PC-9 (cell line): ENCODE measurements at regions of chr14 and their contacts with region 1.

Region 1: GRCh38 chr14:68979021-68979782 is at the start of gene ACTN1:
- DNase-seq: peak; percentile 95 to 98
- H3K4me3 ChIP-seq: peak within 1 kb of the TSS; percentile 76
- H3K27ac ChIP-seq: peak within 1 kb of the TSS; percentile 93
- H3K4me1 ChIP-seq: peaks cover 47% of the 10 kb centered on the region
- H3K27me3 ChIP-seq: no peaks in the 10 kb centered on the region
- CTCF ChIP-seq: no peak
- total RNA-seq, gene ACTN1: 314 and 323 TPM in 2 replicates

Region 2: DNA sequence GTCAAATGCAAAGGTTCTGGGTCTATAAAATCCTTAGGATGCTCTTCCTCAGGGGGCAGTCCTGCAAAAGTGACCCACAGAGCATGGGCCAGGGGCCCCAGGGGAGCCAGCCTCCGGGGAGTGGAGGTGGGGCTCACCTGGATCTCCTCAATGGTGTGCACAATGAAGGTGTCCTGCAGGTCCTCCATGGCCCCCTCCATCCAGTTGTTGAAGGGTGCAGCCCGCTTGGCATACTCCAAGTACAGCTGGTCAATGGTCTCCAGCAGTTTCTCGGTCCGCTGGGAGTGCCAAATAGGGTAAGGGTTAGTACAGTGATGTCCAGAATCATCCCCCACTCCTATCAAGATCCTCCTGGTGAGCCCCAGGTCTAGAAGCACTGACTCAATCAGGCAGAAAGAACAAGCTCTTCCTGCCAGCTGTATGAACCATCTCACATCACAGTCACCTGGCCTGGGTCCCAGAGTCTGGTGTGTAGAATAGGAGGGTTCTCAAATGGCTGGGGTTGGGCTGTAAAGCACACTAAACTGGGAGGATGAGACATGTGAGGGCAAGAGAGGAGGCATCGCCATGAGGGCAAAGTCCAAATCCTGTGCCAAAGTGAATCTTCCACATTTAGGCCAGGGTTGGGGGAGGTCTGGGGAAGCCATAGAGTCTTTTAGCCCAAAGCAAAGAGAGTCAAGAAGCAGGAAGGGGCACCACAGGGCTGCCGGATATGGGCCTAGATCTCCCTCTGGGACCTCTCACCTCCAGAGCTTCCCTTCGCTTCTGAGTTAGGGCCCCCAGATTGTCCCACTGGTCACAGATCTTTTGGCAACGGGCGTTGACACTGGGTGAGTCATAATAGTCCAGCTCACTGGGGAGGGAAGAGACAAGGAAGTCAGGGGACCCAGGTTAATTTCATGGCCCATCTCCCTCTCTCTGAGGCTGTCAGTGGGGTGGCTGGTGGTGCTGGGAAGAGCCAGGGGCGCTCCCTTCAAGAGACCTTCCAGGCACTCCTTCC is 94.9 kb before region 1 on chr14:
- CTCF ChIA-PET with region 1: no interaction called
- POLR2A ChIA-PET with region 1: no interaction called
- intact Hi-C with region 1: no loop called
- DNase-seq: no peak
- H3K4me3 ChIP-seq: no peak overlapping the region
- H3K27ac ChIP-seq: no peak overlapping the region
- H3K4me1 ChIP-seq: no peaks in the 10 kb centered on the region
- H3K27me3 ChIP-seq: no peaks in the 10 kb centered on the region
- CTCF ChIP-seq: no peak

Region 3: GRCh38 chr14:68911594-68912227 is 67.5 kb before region 1 on chr14:
- CTCF ChIA-PET with region 1: interaction called, 3 read pairs
- POLR2A ChIA-PET with region 1: interaction called, 4 read pairs
- intact Hi-C with region 1: loop called (anchors 1 kb)
- DNase-seq: peak; percentile 69 to 73
- H3K4me3 ChIP-seq: no peak overlapping the region
- H3K27ac ChIP-seq: no peak overlapping the region
- H3K4me1 ChIP-seq: no peaks in the 10 kb centered on the region
- H3K27me3 ChIP-seq: no peaks in the 10 kb centered on the region
- CTCF ChIP-seq: peak; percentile 98

Region 4: DNA sequence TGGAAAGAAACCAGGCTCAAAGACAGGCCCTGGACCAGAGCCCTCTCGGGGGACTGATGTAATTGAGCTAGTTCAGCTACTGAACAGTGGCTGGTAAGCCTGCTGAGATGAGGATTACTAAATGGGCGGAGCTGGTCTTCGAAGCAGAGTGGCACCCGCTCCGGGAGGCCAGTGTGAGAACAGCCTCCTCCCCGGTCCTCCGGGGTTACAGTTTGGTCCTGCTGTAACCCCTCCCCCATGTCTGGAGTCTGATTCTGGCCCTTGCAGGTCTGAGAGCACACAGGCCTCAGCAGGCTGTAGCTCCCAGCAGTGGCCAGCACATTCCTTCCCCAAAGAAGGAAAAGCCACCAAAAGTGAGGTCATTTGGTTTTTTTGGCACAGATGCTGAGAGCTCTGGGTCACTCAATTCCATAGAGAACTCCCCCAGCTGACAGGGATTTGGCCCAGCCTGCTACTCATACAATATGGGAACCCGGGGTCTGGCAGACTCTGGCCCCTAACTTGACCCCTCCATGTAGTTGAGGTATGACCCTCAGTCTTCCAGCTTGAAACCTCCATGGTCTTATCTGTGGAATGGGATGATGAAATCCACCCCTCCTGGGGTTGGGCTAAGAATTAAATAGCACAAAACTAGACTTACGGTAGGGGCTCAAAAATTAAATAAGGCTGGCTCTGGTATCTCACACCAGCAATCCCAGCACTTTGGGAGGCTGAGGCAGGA is 39.1 kb before region 1 on chr14:
- CTCF ChIA-PET with region 1: interaction called, 7 read pairs
- POLR2A ChIA-PET with region 1: interaction called, 44 read pairs
- intact Hi-C with region 1: loop called (anchors 1 kb)
- DNase-seq: peak; percentile 76 to 80
- H3K4me3 ChIP-seq: no peak overlapping the region
- H3K27ac ChIP-seq: peak overlapping the region; percentile 40
- H3K4me1 ChIP-seq: peaks cover 78% of the 10 kb centered on the region
- H3K27me3 ChIP-seq: no peaks in the 10 kb centered on the region
- CTCF ChIP-seq: no peak

Region 5: DNA sequence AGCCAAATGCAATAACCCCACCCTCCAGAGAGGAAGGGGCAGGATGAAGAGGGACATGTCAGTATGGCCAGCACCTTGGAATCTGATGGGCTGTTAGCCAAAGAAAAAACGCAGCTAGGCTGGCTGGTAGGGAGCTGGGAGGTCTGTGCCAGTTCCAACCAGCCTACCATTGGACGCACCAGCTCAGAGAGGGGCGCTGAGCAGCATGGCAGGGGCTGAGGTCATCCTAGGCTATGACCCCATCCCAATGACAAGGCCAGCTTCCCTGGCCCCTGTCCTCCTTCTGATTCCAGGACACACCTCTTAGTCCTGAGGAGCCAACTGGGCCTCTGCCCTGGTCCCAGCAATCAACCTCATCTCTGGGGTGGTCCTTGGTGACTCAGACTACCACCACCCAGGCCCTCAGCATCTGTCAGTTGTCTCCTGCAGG is 12.3 kb before region 1 on chr14:
- CTCF ChIA-PET with region 1: no interaction called
- POLR2A ChIA-PET with region 1: interaction called, 12 read pairs
- intact Hi-C with region 1: loop called (anchors 1 kb)
- DNase-seq: peak in 1 of 2 experiments; percentile 67
- H3K4me3 ChIP-seq: no peak overlapping the region
- H3K27ac ChIP-seq: peak overlapping the region; percentile 18; the same call in 1 of the 2 replicates
- H3K4me1 ChIP-seq: peaks cover 52% of the 10 kb centered on the region
- H3K27me3 ChIP-seq: no peaks in the 10 kb centered on the region
- CTCF ChIP-seq: no peak

Region 6: DNA sequence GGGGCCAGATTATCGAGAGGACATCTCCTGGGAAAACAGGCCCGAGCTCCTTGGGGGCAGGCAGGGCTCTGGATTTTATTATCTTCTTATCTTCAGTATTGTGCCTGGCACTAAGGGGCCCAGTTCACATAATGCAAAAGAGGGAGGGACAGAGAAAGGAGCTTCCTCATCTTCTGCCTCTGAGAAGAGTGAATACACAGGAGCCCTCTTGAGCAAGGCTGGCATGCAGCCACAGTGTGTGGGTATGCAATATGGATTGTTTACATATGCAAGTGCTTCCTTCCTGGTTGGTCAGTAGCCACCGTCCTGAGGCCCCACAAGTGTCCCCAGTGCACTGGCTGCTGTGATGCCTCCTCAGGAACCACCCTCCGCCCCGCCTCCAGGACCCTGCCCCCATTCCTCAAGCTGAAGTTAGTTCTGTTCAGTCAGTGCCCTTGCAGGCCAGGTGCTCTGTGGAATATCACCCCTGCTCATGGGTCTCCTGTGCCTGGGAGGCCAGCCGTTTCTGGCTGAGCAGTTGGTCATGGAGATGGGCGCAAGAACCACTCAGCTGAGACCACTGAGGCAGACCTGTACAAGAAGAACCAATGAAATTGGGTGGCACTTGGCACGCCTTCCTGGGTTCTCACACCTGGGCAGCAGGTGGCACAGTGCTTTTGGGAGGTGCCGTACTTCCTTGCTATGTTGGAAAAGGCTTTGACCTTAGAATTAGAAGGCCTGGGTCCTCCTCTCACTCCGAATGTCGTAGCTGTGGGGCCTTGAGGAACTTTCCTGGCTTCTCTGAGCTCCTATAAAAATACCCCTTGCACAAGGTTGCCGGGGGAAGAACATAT is 35.0 kb after region 1 on chr14:
- CTCF ChIA-PET with region 1: no interaction called
- POLR2A ChIA-PET with region 1: interaction called, 10 read pairs
- intact Hi-C with region 1: no loop called
- DNase-seq: peak; percentile 83 to 98
- H3K4me3 ChIP-seq: no peak overlapping the region
- H3K27ac ChIP-seq: no peak overlapping the region
- H3K4me1 ChIP-seq: peaks cover 28% of the 10 kb centered on the region
- H3K27me3 ChIP-seq: no peaks in the 10 kb centered on the region
- CTCF ChIP-seq: no peak

Region 7: DNA sequence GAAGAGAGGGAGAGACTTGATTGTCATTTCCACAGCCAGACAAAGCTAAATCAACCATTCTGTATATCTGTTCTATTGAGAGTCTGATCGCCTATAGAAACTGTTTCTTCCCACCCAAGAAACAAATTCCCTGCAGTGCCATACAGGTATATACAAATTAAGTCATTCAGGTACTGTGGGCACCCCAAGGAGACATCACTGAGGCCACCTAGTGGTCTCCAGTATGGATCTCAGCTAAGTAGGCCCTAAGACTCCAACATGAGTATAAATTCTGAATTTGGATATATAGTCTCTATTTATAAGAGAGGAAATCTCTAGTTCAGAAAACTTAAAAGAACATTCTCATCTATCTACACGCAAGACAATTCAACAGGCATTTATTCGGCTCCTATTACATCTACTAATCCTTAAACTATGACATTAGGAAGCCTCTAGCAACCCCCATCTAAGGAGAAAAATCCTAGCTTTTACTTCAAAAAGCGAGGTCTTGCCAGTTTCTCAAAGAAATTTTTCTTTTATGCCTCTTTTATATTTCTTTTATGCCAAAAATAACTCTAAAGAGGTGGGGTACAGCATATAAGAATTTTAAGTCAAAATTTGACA is 111.1 kb after region 1 on chr14:
- CTCF ChIA-PET with region 1: no interaction called
- POLR2A ChIA-PET with region 1: interaction called, 3 read pairs
- intact Hi-C with region 1: loop called (anchors 5 kb)
- DNase-seq: peak; percentile 47 to 68
- H3K4me3 ChIP-seq: no peak overlapping the region
- H3K27ac ChIP-seq: no peak overlapping the region
- H3K4me1 ChIP-seq: peaks cover 20% of the 10 kb centered on the region
- H3K27me3 ChIP-seq: no peaks in the 10 kb centered on the region
- CTCF ChIP-seq: peak; percentile 95